Heart right ventricle (tissue), 16 donors: ENCODE measurements at regions of chr2 and their contacts with region 1.

Region 1: GRCh38 chr2:202588647-202589581 is 45.9 kb upstream of the FAM117B start:
- DNase-seq: peak; percentile 32 to 68
- ATAC-seq: peak; percentile 82 to 90 (median 87)
- H3K4me3 ChIP-seq: peak overlapping the region in 7 of 10 donors; percentile 8 to 40 (median 22)
- H3K27ac ChIP-seq: no peak overlapping the region
- H3K4me1 ChIP-seq: peaks cover 2 to 23% (median 9%) of the 10 kb centered on the region in 9 donors
- H3K27me3 ChIP-seq: no peaks in the 10 kb centered on the region
- CTCF ChIP-seq: peak; percentile 86 to 97 (median 92)

Region 2: GRCh38 chr2:202628646-202629198 is 39.8 kb after region 1 on chr2:
- intact Hi-C with region 1: loop called in 2 of 10 experiments (anchors 5 kb)
- DNase-seq: no peak
- ATAC-seq: no peak
- H3K4me3 ChIP-seq: no peak overlapping the region
- H3K27ac ChIP-seq: no peak overlapping the region
- H3K4me1 ChIP-seq: peaks cover 0 to 17% (median 9%) of the 10 kb centered on the region in 9 donors
- H3K27me3 ChIP-seq: no peaks in the 10 kb centered on the region
- CTCF ChIP-seq: no peak

Region 3: DNA sequence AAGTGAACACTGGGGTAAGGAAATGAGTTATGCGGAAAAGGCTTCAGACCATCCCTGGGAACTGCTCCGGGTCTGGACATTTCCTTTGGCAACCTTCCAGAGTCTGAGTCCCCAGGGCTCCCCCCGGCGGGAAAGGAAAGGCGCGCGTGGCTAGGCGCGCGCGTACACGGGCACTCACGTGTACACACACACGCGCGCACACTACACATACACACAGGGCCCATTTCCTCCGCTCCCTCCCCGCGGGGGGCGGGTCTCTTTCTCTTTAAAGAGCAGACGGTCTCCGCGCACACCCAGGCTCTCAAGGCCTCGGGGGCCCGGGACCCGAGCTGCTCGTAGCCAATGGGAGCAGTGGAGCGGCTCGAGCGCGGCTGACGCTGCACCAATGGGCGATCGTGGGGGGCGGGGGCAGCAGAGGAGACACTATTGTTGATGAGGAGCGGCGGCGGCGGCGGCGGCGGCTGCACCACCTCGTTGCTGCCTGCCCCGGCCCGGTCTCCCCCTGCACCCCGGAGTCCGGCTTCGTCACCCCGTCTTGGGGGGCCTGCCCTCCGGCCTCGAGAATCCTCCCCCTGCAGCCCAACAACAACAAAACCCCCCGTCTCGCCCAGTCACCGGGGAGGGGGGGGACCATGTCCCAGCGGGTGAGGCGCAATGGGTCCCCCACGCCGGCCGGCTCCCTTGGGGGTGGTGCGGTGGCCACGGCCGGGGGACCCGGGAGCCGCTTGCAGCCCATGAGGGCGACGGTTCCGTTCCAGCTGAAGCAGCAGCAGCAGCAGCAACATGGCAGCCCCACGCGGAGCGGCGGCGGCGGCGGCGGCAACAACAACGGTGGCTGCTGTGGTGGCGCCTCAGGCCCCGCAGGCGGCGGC is 45.9 kb after region 1 on chr2 and contains the start of gene FAM117B:
- intact Hi-C with region 1: loop called in 2 of 10 experiments (anchors 5 kb)
- DNase-seq: peak; percentile 98
- ATAC-seq: peak; percentile 97 to 99 (median 98)
- H3K4me3 ChIP-seq: peak within 1 kb of the TSS; percentile 85 to 99 (median 96)
- H3K27ac ChIP-seq: peak within 1 kb of the TSS; percentile 81 to 95 (median 90)
- H3K4me1 ChIP-seq: peaks cover 3 to 30% (median 24%) of the 10 kb centered on the region in 9 donors
- H3K27me3 ChIP-seq: no peaks in the 10 kb centered on the region
- CTCF ChIP-seq: peak in 1 of 9 donors; percentile 5
- total RNA-seq, gene FAM117B: 0.75 to 3.9 (median 2.6) TPM

Region 4: GRCh38 chr2:202861987-202862386 is 273.1 kb after region 1 on chr2:
- intact Hi-C with region 1: loop called in 1 of 10 experiments (anchors 10 kb)
- DNase-seq: no peak
- ATAC-seq: no peak
- H3K4me3 ChIP-seq: no peak overlapping the region
- H3K27ac ChIP-seq: no peak overlapping the region
- H3K4me1 ChIP-seq: no peaks in the 10 kb centered on the region
- H3K27me3 ChIP-seq: no peaks in the 10 kb centered on the region
- CTCF ChIP-seq: no peak

Region 5: GRCh38 chr2:202870431-202871299 is 281.8 kb after region 1 on chr2:
- intact Hi-C with region 1: loop called in 8 of 10 experiments (anchors 2 to 10 kb)
- DNase-seq: peak; percentile 54 to 60
- ATAC-seq: peak; percentile 48 to 91 (median 86)
- H3K4me3 ChIP-seq: peak overlapping the region; percentile 32 to 98 (median 88)
- H3K27ac ChIP-seq: peak overlapping the region; percentile 14 to 86 (median 84)
- H3K4me1 ChIP-seq: peaks cover 0 to 15% (median 7%) of the 10 kb centered on the region in 9 donors
- H3K27me3 ChIP-seq: no peaks in the 10 kb centered on the region
- CTCF ChIP-seq: peak in 7 of 9 donors; percentile 33 to 61 (median 44)